ENCODE measurements at regions of chr22 and their contacts with region 1.

Region 1: GRCh38 chr22:25461301-25461700 is 103.2 kb upstream of the GRK3 start:
- DNase-seq: no peak

Region 2: GRCh38 chr22:25696763-25697667 is 235.7 kb after region 1 on chr22:
- intact Hi-C with region 1: loop called (anchors 5 kb)
- DNase-seq: no peak

Region 3: DNA sequence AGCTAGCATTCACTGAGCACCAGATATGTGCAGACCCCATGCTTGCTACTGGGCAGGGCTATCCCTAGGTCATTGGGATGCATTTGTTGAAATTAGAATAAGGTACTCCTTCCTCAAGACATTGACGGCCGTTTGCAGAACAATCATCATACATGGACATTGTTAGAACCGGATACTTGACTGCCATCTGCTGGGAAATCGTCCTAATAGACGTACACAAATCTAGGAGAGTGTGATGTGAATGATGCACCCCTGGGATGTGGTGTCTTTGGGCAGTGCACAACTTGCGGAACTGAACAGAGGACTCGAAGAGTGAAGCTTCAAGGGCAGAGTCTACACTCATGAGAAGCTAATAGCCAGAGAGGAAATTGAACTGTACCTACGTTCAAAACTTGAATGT is 316.6 kb after region 1 on chr22:
- intact Hi-C with region 1: loop called (anchors 5 kb)
- DNase-seq: peak in 14 of 42 donors; percentile 8 to 61 (median 26)

Measured in head of caudate nucleus (tissue), 42 donors.